ENCODE measurements at regions of chr2 and their contacts with region 1.

Region 1: GRCh38 chr2:226984750-226985582 is 149.1 kb downstream of the RHBDD1 start:
- DNase-seq: peak; percentile 72
- ATAC-seq: peak; percentile 87
- H3K4me3 ChIP-seq: no peak overlapping the region
- H3K27ac ChIP-seq: no peak overlapping the region
- H3K4me1 ChIP-seq: peaks cover 17% of the 10 kb centered on the region
- H3K27me3 ChIP-seq: no peaks in the 10 kb centered on the region
- CTCF ChIP-seq: peak; percentile 82
- EP300 ChIP-seq: no peak
- POLR2A ChIP-seq: no peak
- RAD21 ChIP-seq: peak; percentile 88

Region 2: GRCh38 chr2:225668606-225669266 is 1316.2 kb before region 1 on chr2:
- CTCF ChIA-PET with region 1: interaction called, 74 read pairs
- POLR2A ChIA-PET with region 1: interaction called, 3 read pairs
- in situ Hi-C with region 1: loop called (anchors 5 kb)
- intact Hi-C with region 1: loop called (anchors 1 kb)
- DNase-seq: peak; percentile 65
- ATAC-seq: peak; percentile 95
- H3K4me3 ChIP-seq: no peak overlapping the region
- H3K27ac ChIP-seq: no peak overlapping the region
- H3K4me1 ChIP-seq: no peaks in the 10 kb centered on the region
- H3K27me3 ChIP-seq: no peaks in the 10 kb centered on the region
- CTCF ChIP-seq: peak; percentile 85
- EP300 ChIP-seq: no peak
- POLR2A ChIP-seq: no peak
- RAD21 ChIP-seq: 0 out of 2 replicates have a peak, but pooled peaks have one; percentile 31

Region 3: GRCh38 chr2:225889446-225889850 is 1095.5 kb before region 1 on chr2:
- CTCF ChIA-PET with region 1: interaction called, 4 read pairs
- POLR2A ChIA-PET with region 1: no interaction called
- in situ Hi-C with region 1: loop called (anchors 5 kb)
- intact Hi-C with region 1: loop called (anchors 1 kb)
- DNase-seq: peak; percentile 57
- ATAC-seq: peak; percentile 71
- H3K4me3 ChIP-seq: no peak overlapping the region
- H3K27ac ChIP-seq: no peak overlapping the region
- H3K4me1 ChIP-seq: peaks cover 4% of the 10 kb centered on the region
- H3K27me3 ChIP-seq: no peaks in the 10 kb centered on the region
- CTCF ChIP-seq: peak; percentile 81
- EP300 ChIP-seq: peak in 1 of 2 experiments; percentile 49; a peak in 1 of 4 replicates
- POLR2A ChIP-seq: no peak
- RAD21 ChIP-seq: peak; percentile 51; the same call in 1 of the 2 replicates

Region 4: DNA sequence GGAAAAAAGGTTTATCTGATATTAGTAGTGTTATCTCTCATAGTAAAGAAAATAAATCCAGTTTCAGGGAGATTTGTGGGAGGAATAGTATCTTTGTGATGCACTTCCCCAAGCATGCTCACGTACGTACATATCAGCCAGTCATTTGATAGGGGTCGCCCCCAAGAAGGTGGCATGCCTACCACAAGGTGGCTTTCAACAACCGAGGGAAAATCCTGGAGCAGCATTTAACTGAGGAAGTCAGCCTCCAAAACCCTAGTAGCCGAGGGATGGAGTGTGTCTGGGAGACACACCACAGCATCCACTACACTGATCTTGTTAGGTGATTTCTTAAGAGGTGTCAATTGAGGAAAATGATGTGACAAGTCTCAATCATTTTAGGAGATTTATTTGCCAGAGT is 961.6 kb before region 1 on chr2:
- CTCF ChIA-PET with region 1: no interaction called
- POLR2A ChIA-PET with region 1: no interaction called
- in situ Hi-C with region 1: no loop called
- intact Hi-C with region 1: loop called (anchors 1 kb)
- DNase-seq: peak; percentile 51
- ATAC-seq: peak; percentile 88
- H3K4me3 ChIP-seq: no peak overlapping the region
- H3K27ac ChIP-seq: no peak overlapping the region
- H3K4me1 ChIP-seq: peaks cover 8% of the 10 kb centered on the region
- H3K27me3 ChIP-seq: no peaks in the 10 kb centered on the region
- CTCF ChIP-seq: peak; percentile 66
- EP300 ChIP-seq: no peak
- POLR2A ChIP-seq: no peak
- RAD21 ChIP-seq: peak; percentile 54

Region 5: DNA sequence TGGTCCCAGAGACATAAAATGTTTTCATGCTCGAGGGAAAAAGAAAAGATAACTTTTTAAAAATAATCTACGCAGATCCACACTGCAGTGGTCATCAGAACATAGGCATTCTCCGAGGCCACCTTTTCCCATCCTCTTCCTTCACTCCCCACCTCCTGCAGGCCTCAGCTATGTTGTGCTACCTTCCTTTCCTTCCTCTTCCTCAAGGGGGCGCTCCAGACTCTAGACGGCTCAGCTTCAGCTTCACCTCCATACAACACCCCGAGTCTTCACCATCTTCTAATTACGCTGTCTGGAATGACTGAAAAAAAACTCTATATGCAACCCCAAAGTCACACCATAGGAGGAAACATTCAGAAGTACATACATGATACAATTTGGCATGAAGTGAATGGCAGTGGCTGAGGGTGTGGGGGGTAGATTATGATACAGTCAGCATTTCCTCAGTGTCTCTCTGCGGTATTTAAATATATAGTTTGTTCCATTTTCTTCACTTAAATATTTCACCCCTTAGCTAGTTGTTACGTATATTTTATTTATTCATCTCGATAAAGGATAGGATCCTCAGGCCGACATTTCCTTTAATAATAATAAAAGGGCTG is 769.0 kb before region 1 on chr2:
- CTCF ChIA-PET with region 1: no interaction called
- POLR2A ChIA-PET with region 1: no interaction called
- in situ Hi-C with region 1: no loop called
- intact Hi-C with region 1: loop called (anchors 10 kb)
- DNase-seq: peak; percentile 63
- ATAC-seq: peak; percentile 99
- H3K4me3 ChIP-seq: no peak overlapping the region
- H3K27ac ChIP-seq: no peak overlapping the region
- H3K4me1 ChIP-seq: 0 out of 2 replicates have a peak, but pooled peaks cover 5% of the 10 kb centered on the region
- H3K27me3 ChIP-seq: no peaks in the 10 kb centered on the region
- CTCF ChIP-seq: peak; percentile 89
- EP300 ChIP-seq: peak in 1 of 2 experiments; percentile 45; a peak in 1 of 4 replicates
- POLR2A ChIP-seq: no peak
- RAD21 ChIP-seq: peak; percentile 78

Region 6: GRCh38 chr2:226813148-226813701 is 171.7 kb before region 1 on chr2:
- CTCF ChIA-PET with region 1: interaction called, 6 read pairs
- POLR2A ChIA-PET with region 1: interaction called, 5 read pairs
- in situ Hi-C with region 1: loop called (anchors 5 kb)
- intact Hi-C with region 1: loop called (anchors 1 kb)
- DNase-seq: no peak
- ATAC-seq: peak; percentile 71
- H3K4me3 ChIP-seq: no peak overlapping the region
- H3K27ac ChIP-seq: no peak overlapping the region
- H3K4me1 ChIP-seq: no peaks in the 10 kb centered on the region
- H3K27me3 ChIP-seq: no peaks in the 10 kb centered on the region; a peak in 1 of 5 replicates
- CTCF ChIP-seq: peak; percentile 57
- EP300 ChIP-seq: no peak
- POLR2A ChIP-seq: no peak
- RAD21 ChIP-seq: 0 out of 2 replicates have a peak, but pooled peaks have one; percentile 34

Region 7: GRCh38 chr2:226903179-226903578 is 81.8 kb before region 1 on chr2:
- CTCF ChIA-PET with region 1: no interaction called
- POLR2A ChIA-PET with region 1: no interaction called
- in situ Hi-C with region 1: no loop called
- intact Hi-C with region 1: no loop called
- DNase-seq: no peak
- ATAC-seq: no peak
- H3K4me3 ChIP-seq: no peak overlapping the region
- H3K27ac ChIP-seq: no peak overlapping the region
- H3K4me1 ChIP-seq: no peaks in the 10 kb centered on the region
- H3K27me3 ChIP-seq: no peaks in the 10 kb centered on the region
- CTCF ChIP-seq: no peak
- EP300 ChIP-seq: no peak
- POLR2A ChIP-seq: no peak
- RAD21 ChIP-seq: no peak

Measured in HepG2 (cell line).